ENCODE measurements at regions of chr3 and their contacts with region 1.

Region 1: GRCh38 chr3:69306239-69307185 is 79.4 kb downstream of the FRMD4B start:
- DNase-seq: peak; percentile 70
- H3K4me3 Mint-ChIP-seq: no peak overlapping the region
- H3K27ac Mint-ChIP-seq: no peak overlapping the region
- H3K4me1 Mint-ChIP-seq: peaks cover 6% of the 10 kb centered on the region
- H3K27me3 Mint-ChIP-seq: no peaks in the 10 kb centered on the region
- CTCF ChIP-seq: peak; percentile 76

Region 2: GRCh38 chr3:69095636-69096035 is 210.9 kb before region 1 on chr3:
- CTCF ChIA-PET with region 1: no interaction called
- intact Hi-C with region 1: no loop called
- DNase-seq: no peak
- H3K4me3 Mint-ChIP-seq: no peak overlapping the region
- H3K27ac Mint-ChIP-seq: no peak overlapping the region
- H3K4me1 Mint-ChIP-seq: peaks cover 20% of the 10 kb centered on the region
- H3K27me3 Mint-ChIP-seq: no peaks in the 10 kb centered on the region
- CTCF ChIP-seq: no peak

Region 3: DNA sequence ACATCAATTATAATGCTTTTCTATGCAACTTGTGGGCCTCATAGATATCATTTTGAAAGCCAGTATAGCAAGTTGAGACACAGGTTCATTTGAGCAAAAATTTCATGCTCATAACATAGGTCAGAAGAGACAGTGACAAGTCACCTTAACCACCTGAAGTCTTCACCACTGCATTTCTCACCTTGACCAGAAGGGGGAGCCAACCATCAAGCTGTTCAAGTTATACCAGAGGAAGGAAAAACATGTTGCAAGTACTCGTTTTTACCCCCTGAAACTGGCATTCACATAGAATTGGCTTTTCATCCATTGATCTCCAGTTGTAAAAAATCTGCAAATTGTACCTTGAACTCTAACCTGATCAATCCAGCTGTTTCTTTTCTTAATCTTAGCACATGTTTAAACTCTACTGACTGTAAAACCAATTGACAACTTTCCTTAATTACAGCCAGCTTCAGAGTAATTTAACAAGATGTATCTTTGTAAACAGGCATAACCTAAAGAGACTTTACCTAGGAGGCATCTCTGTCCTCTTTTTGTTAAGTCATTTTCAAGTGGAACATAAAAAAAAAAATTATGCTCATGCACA is 185.5 kb before region 1 on chr3:
- CTCF ChIA-PET with region 1: no interaction called
- intact Hi-C with region 1: loop called (anchors 1 kb)
- DNase-seq: peak; percentile 85
- H3K4me3 Mint-ChIP-seq: no peak overlapping the region
- H3K27ac Mint-ChIP-seq: no peak overlapping the region
- H3K4me1 Mint-ChIP-seq: peaks cover 29% of the 10 kb centered on the region
- H3K27me3 Mint-ChIP-seq: no peaks in the 10 kb centered on the region
- CTCF ChIP-seq: peak; percentile 60

Region 4: DNA sequence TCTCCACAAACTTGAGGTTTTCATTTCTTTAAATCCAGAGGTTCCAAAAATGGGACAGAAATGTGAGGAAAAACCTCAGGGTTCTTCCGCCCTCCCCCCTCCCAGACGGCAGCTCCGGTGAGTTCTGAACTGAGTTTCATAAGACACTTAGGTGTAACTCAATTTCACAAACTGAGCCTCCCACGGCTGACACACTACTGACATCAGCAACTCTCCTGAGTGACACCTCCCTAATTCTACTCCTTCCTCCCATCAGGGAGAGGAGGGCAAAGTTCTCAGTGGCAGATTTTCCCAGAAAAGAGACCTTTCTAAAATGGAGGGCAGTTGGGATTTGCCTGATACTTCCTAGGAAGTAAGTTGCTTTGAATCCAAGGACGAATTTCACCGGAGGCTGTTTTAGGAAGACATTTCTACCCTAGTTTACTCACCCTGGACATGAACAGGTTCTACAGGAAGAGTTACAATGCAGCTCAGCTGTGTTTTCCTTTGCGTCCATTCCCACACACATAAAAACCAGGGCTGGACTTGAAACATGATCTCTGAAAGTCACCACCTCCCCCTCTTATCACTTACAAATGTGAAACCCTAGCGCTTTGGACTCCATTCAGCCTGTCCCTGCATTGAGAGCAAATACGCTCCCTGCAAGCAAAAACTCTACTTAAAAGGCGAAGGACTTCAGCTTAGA is 106.0 kb before region 1 on chr3:
- CTCF ChIA-PET with region 1: interaction called, 11 read pairs
- intact Hi-C with region 1: no loop called
- DNase-seq: peak; percentile 61
- H3K4me3 Mint-ChIP-seq: peak overlapping the region; percentile 77
- H3K27ac Mint-ChIP-seq: peak overlapping the region; percentile 95
- H3K4me1 Mint-ChIP-seq: peaks cover 44% of the 10 kb centered on the region
- H3K27me3 Mint-ChIP-seq: no peaks in the 10 kb centered on the region
- CTCF ChIP-seq: no peak

Region 5: GRCh38 chr3:69240651-69241568 is 65.6 kb before region 1 on chr3:
- CTCF ChIA-PET with region 1: interaction called, 12 read pairs
- intact Hi-C with region 1: no loop called
- DNase-seq: no peak
- H3K4me3 Mint-ChIP-seq: no peak overlapping the region
- H3K27ac Mint-ChIP-seq: peak overlapping the region; percentile 36
- H3K4me1 Mint-ChIP-seq: peaks cover 26% of the 10 kb centered on the region
- H3K27me3 Mint-ChIP-seq: no peaks in the 10 kb centered on the region
- CTCF ChIP-seq: no peak

Region 6: DNA sequence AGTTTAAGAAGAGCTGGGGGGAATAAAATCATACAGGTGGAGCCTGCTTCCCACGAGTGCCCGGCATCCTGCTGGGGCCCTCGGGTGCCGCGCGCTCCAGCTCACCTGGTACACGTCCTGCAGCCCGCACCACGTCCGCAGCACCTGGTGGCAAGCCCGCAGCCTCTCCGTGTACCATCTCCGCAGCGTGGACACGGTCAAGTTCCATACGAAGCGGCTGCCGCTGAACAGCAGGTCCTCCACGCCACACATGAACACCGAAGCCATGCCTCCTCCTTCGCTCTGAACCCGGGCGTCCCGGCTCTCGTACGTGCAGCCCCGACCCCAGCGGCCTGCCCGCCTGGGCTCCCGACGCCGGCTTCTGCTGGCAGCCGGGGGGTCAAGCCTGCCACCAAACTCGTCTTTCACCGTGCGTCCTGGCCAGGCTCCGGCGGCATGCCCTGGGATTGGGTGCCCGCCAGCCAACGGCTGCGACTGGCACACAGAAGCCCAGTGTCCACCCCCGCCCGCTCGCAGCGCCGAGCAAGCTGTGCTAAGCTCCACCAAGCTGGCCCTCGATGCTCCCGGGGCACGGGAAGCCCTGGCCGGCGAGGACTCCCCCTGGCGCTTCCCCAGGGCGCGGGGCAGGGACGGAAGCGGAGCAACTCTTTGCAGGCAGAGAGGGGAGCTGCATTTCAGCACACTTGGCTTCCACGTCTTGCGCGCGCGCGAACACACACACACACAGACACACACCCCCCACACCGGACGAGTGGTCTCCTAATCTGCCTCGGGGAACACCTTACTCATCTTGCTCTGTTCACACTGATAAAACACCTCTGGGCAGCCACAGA is 79.4 kb after region 1 on chr3 and contains the start of gene FRMD4B:
- CTCF ChIA-PET with region 1: interaction called, 10 read pairs
- intact Hi-C with region 1: no loop called
- DNase-seq: peak; percentile 81
- H3K4me3 Mint-ChIP-seq: peak within 1 kb of the TSS; percentile 82
- H3K27ac Mint-ChIP-seq: no peak within 1 kb of the TSS
- H3K4me1 Mint-ChIP-seq: peaks cover 8% of the 10 kb centered on the region
- H3K27me3 Mint-ChIP-seq: peaks cover 11% of the 10 kb centered on the region
- CTCF ChIP-seq: no peak
- total RNA-seq, gene FRMD4B: 13.8 and 16.7 TPM in 2 replicates

Region 7: GRCh38 chr3:69671082-69671952 is 364.8 kb after region 1 on chr3:
- CTCF ChIA-PET with region 1: interaction called, 3 read pairs
- intact Hi-C with region 1: loop called (anchors 1 kb)
- DNase-seq: peak; percentile 46
- H3K4me3 Mint-ChIP-seq: no peak overlapping the region
- H3K27ac Mint-ChIP-seq: no peak overlapping the region
- H3K4me1 Mint-ChIP-seq: peaks cover 24% of the 10 kb centered on the region
- H3K27me3 Mint-ChIP-seq: no peaks in the 10 kb centered on the region
- CTCF ChIP-seq: peak; percentile 44

Measured in Calu3 (cell line).